ENCODE measurements at regions of chr11 and their contacts with region 1.

Region 1: DNA sequence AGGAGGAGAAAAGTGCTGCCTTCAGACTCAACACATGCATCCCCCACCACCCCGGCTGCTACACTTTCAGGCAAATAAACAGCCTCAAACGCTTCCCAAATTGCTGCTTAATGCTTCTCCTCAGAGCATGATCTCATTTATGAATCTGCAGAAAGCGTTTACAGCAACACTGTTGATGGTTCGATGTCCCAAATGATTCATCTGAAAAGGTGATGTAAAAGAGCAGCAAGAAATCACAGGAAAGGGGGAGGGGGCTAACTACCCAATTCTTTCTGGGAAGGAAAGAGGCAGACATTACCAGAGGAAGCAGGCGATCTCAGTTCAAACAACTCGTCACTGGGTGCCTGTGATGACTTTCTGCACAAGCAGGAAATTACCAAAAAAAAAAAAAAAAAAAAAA is 119.6 kb downstream of the TENM4 start:
- DNase-seq: no peak
- H3K4me3 Mint-ChIP-seq: no peak overlapping the region
- H3K27ac Mint-ChIP-seq: peak overlapping the region; percentile 39
- H3K4me1 Mint-ChIP-seq: peaks cover 22% of the 10 kb centered on the region
- H3K27me3 Mint-ChIP-seq: no peaks in the 10 kb centered on the region
- CTCF ChIP-seq: no peak

Region 2: GRCh38 chr11:79363861-79364378 is 42.7 kb after region 1 on chr11:
- CTCF ChIA-PET with region 1: no interaction called
- POLR2A ChIA-PET with region 1: interaction called, 3 read pairs
- intact Hi-C with region 1: loop called (anchors 5 kb)
- DNase-seq: no peak
- H3K4me3 Mint-ChIP-seq: no peak overlapping the region
- H3K27ac Mint-ChIP-seq: no peak overlapping the region
- H3K4me1 Mint-ChIP-seq: peaks cover 16% of the 10 kb centered on the region
- H3K27me3 Mint-ChIP-seq: no peaks in the 10 kb centered on the region
- CTCF ChIP-seq: no peak

Region 3: DNA sequence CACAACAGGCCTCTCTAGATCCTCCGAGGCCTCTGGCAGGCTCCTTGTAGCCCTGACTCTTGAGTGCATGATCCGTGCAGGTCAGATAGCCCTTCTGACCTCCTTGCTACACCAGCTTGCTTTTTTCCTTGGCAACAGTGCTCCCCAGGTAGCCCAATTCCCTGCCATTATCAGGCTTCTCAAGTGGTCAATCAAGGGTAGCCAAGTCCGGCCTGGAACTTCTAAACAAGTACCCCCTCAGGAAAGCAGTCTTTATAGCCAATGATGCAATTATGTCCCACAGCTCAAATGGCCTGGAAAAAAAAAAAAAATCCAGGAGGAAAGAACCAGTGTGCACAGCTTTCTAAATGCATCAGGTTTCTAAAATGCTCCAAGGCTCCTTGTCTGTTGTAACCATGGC is 59.8 kb after region 1 on chr11:
- CTCF ChIA-PET with region 1: no interaction called
- POLR2A ChIA-PET with region 1: no interaction called
- intact Hi-C with region 1: no loop called
- DNase-seq: no peak
- H3K4me3 Mint-ChIP-seq: no peak overlapping the region
- H3K27ac Mint-ChIP-seq: no peak overlapping the region
- H3K4me1 Mint-ChIP-seq: peaks cover 9% of the 10 kb centered on the region
- H3K27me3 Mint-ChIP-seq: no peaks in the 10 kb centered on the region
- CTCF ChIP-seq: no peak

Region 4: DNA sequence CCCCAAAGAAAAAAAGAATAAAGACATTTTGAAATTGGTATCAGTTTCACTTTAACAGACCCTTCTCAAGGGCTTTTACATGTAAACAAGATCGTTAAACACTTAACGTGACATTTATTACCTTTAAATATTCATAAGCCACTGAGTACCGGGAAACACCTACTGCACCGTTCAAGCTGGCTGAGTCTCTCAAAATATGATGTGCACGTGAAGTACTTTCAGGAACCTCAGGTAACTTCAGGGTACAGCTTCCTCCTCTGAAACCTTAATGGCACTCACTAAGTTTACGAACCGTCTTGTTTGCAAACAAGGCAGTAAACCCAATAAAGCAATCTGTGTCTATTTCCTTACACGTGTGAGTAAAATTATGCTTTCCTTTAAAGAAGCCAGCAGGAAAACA is 225.1 kb after region 1 on chr11:
- CTCF ChIA-PET with region 1: no interaction called
- POLR2A ChIA-PET with region 1: no interaction called
- intact Hi-C with region 1: no loop called
- DNase-seq: no peak
- H3K4me3 Mint-ChIP-seq: no peak overlapping the region
- H3K27ac Mint-ChIP-seq: no peak overlapping the region
- H3K4me1 Mint-ChIP-seq: no peaks in the 10 kb centered on the region
- H3K27me3 Mint-ChIP-seq: no peaks in the 10 kb centered on the region
- CTCF ChIP-seq: no peak

Measured in MCF 10A (cell line).